Activated naive CD8-positive, alpha-beta T cell treated with anti-CD3 and anti-CD28 coated beads, Interleukin-2, amount 10 ng/mL, durations not matched to agents 7 days and 5 days (primary cell): ENCODE measurements at regions of chr9 and their contacts with region 1.

Region 1: GRCh38 chr9:93119953-93120845 is 13.9 kb downstream of the NINJ1 start:
- DNase-seq: peak; percentile 57
- ATAC-seq: peak; percentile 89
- H3K4me3 Mint-ChIP-seq: peak overlapping the region; percentile 32
- H3K27ac Mint-ChIP-seq: peak overlapping the region; percentile 91
- H3K4me1 Mint-ChIP-seq: peaks cover 15% of the 10 kb centered on the region
- H3K27me3 Mint-ChIP-seq: no peaks in the 10 kb centered on the region

Region 2: DNA sequence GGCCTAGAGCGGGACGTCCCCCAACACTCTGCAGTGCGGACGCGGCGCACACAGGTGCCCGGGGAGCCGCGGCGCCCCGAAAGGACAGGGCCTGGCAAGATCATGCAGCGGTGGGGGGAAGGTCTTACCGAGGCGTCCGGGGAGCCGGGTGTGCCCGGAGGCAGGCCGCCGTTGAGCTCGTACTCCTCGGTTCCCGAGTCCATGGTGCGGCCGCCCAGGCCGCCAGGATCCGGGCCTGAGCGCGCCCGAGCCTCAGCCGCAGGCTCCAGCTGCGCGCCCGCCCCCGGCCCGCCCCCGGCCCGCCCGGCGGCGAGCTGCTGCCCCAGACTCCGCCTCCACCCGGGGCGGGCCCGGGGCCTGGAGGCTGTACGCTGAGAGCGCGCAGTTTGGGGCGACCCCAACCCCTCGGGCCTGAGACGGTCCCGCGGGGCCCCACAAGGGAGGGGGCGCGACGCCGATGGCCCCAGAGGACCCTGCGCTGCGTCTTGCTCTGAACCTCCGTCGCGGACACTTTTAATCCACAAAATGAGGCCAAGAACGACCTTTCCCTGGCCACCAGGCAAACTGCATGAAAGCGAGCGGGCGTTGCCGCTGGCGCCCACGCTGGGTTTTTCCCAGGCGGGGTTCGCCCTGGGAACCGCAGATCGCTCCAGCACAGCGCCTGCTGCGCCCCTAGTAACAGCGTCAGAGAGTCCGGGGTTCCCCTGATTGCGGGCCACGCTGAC is 14.0 kb after region 1 on chr9 and contains the start of gene NINJ1:
- POLR2A ChIA-PET with region 1: interaction called, 12 read pairs
- DNase-seq: peak; percentile 87
- ATAC-seq: peak; percentile 86
- H3K4me3 Mint-ChIP-seq: peak within 1 kb of the TSS; percentile 89
- H3K27ac Mint-ChIP-seq: peak within 1 kb of the TSS; percentile 87
- H3K4me1 Mint-ChIP-seq: peaks cover 32% of the 10 kb centered on the region
- H3K27me3 Mint-ChIP-seq: no peaks in the 10 kb centered on the region
- total RNA-seq, gene NINJ1: 29.5 to 30.4 TPM